ENCODE measurements at regions of chr11 and their contacts with region 1.

Region 1: DNA sequence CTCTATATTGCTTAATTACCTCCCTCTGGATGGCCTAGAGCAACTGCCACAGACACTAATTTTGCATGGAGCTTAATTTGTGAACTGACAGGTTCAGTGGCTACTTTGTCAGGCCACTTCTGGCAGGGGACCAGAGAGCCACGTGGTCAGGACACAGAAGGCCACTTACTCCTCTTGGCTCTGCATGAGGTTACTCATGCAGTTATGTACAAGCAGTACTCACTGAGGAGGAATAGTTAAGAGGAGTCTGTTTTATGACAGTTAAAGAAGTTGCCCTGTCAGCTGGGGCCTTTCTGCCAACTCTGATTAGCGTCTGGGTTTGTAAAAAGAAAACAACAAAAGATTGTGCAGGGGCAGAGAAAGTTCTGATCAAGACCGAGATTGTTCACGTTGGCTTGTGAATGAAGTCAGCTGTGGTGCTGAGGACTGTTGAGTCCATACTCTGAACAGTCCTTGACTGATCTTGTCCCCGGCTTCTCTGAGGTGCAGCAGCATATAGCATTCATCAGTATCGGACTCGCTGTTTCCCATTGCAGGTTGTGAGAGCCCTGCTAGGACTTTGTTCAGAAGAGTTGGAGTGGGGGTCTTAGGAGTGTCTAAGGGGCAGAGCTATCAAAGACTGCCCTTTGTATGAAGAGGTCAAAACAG is 41.4 kb downstream of the PPFIBP2 start:
- DNase-seq: peak; percentile 77
- ATAC-seq: peak; percentile 89 to 94

Region 2: GRCh38 chr11:7353100-7353499 is 202.1 kb before region 1 on chr11:
- intact Hi-C with region 1: no loop called
- DNase-seq: no peak
- ATAC-seq: no peak

Region 3: DNA sequence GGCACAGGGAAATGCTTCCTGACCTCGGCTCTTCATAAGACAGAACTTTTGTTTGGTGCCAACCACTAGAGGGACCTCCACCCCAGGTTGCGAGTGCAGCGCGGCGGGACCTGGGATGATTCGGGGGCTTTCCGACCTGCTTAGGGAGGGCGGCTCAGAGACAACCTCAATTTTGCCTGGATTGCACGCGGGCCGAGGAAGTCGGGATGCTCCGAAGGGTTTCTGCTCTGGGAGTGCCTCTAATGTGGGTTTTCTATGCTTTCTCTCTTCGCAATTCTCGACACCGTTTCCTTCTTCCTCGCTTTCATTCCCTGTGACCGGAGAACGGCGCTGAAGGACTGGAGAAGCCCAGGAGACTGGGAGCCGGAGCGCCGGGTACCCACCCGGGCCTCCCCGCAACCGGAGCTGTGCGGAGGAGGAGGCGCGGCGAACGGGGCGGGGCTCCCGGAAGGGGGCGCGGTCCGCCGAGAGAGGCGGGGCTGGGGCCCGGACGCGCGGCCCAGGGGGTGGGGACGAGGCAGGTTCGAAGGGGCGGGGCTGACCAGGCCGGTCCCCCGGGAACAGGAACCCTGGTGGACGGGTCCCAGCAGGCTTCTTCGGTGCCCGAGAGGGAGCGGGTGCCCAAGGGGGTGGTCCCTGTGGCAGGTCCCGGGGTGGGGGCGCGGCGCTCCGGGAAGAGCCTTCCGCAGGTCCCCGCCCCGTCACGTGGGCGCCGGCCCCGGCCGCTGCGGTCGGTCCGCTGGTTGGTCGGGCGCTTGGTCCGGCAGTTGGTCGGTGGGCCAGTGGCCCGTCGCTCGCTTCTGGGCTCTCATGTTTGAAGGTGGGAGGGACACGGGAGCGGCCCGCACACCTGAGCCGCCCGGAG is 41.7 kb before region 1 on chr11 and contains the start of gene PPFIBP2:
- intact Hi-C with region 1: loop called in 1 of 2 experiments (anchors 5 kb)
- DNase-seq: peak; percentile 84
- ATAC-seq: peak; percentile 90 to 95
- total RNA-seq, gene PPFIBP2: 16.3 to 25.5 TPM

Measured in left cardiac atrium (tissue), 4 donors.